Pancreas (tissue), 10 donors: ENCODE measurements at regions of chr9 and their contacts with region 1.

Region 1: DNA sequence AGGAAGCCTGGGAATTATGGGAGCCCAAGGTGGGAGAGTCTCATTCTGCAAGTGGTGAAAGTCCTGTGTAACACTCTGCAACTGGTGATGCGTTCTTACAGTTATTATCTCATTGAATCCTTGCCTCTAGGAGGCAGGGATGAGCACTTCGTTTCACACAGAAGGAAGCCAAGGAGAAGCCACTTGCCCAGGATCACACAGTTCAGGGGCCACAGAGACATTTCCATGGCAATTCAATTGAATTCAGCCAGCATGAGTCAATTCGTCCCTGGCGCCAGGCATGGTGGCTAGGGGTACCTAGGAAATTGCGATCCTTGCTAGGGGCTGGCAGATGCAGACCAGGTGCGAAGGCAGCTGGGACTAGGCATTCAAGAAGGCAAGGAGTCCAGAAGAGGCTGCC is 26.2 kb downstream of the LHX2 start:
- DNase-seq: no peak
- ATAC-seq: no peak
- H3K4me3 ChIP-seq: no peak overlapping the region
- H3K27ac ChIP-seq: no peak overlapping the region
- H3K4me1 ChIP-seq: peaks cover 0 to 7% (median 4%) of the 10 kb centered on the region in 3 donors
- H3K27me3 ChIP-seq: peaks cover 0 to 17% (median 3%) of the 10 kb centered on the region in 4 donors
- CTCF ChIP-seq: no peak

Region 2: GRCh38 chr9:123426401-123426800 is 611.4 kb before region 1 on chr9:
- intact Hi-C with region 1: no loop called
- DNase-seq: no peak
- ATAC-seq: no peak
- H3K4me3 ChIP-seq: no peak overlapping the region
- H3K27ac ChIP-seq: no peak overlapping the region
- H3K4me1 ChIP-seq: no peaks in the 10 kb centered on the region
- H3K27me3 ChIP-seq: no peaks in the 10 kb centered on the region
- CTCF ChIP-seq: no peak

Region 3: GRCh38 chr9:123544007-123544827 is 493.6 kb before region 1 on chr9:
- intact Hi-C with region 1: loop called in 1 of 3 experiments (anchors 10 kb)
- DNase-seq: no peak
- ATAC-seq: peak in 3 of 4 donors; percentile 65 to 75 (median 65)
- H3K4me3 ChIP-seq: no peak overlapping the region
- H3K27ac ChIP-seq: no peak overlapping the region
- H3K4me1 ChIP-seq: no peaks in the 10 kb centered on the region
- H3K27me3 ChIP-seq: no peaks in the 10 kb centered on the region
- CTCF ChIP-seq: peak in 3 of 4 donors; percentile 56 to 59 (median 56)

Region 4: DNA sequence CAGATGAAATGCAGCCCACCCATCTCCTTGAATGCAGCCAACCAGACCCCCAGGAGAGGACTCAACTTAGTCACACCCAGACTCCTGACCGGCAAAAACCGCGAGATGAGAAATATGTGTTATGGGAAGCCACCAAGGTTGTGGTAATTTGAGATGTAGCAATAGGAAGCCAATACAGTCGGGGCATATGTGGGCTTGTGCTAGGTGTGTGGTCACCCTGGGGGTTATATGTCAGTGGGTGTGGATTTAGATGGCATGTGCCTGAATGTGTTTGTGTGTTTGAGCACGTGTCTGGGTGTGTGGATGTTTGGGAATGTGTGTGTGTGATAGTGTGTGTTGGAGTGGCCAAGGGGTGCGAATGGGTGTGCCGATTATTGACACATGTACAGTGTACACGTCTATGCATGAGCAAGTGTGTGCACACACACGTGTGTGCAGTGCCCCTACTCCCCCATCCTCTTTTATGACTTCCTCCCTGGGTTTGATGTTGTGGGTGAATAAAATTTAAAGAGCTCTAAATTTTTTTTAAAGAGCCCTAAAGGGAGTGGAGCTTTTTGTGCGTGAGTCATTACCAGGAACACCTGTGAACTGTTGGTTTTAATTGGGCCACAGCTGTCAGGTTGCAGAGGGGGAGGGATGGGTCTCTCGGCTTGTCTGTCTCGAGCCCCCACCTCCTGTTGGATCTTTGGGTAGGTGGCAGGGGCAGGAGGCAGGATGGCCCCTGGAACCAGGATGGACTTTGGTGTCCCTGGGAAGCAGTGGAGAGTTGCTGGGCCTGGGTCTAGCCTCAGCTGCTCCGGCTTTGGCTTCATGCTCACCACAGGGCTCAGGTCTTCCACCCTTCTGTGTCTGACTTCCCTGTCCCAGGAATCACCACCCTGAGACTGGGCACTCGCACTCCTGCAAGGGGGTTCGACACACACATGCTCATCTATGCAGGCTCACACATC is 60.6 kb after region 1 on chr9:
- intact Hi-C with region 1: no loop called
- DNase-seq: peak in 1 of 6 donors; percentile 21
- ATAC-seq: no peak
- H3K4me3 ChIP-seq: no peak overlapping the region
- H3K27ac ChIP-seq: no peak overlapping the region
- H3K4me1 ChIP-seq: no peaks in the 10 kb centered on the region
- H3K27me3 ChIP-seq: no peaks in the 10 kb centered on the region
- CTCF ChIP-seq: no peak

Region 5: GRCh38 chr9:124174433-124174832 is 136.7 kb after region 1 on chr9:
- intact Hi-C with region 1: no loop called
- DNase-seq: no peak
- ATAC-seq: peak in 1 of 4 donors; percentile 29
- H3K4me3 ChIP-seq: no peak overlapping the region
- H3K27ac ChIP-seq: no peak overlapping the region
- H3K4me1 ChIP-seq: no peaks in the 10 kb centered on the region
- H3K27me3 ChIP-seq: no peaks in the 10 kb centered on the region
- CTCF ChIP-seq: no peak